Activated CD4-positive, alpha-beta memory T cell treated with anti-CD3 and anti-CD28 coated beads, Interleukin-2, amount 10 ng/mL, durations not matched to agents 7 days and 5 days (primary cell): ENCODE measurements at regions of chr4 and their contacts with region 1.

Region 1: GRCh38 chr4:154998284-154998683 is 210.2 kb upstream of the NPY2R start:
- DNase-seq: no peak
- H3K4me3 Mint-ChIP-seq: no peak overlapping the region
- H3K27ac Mint-ChIP-seq: no peak overlapping the region
- H3K4me1 Mint-ChIP-seq: no peaks in the 10 kb centered on the region
- H3K27me3 Mint-ChIP-seq: no peaks in the 10 kb centered on the region

Region 2: GRCh38 chr4:154982187-154983047 is 15.9 kb before region 1 on chr4:
- CTCF ChIA-PET with region 1: interaction called, 10 read pairs
- POLR2A ChIA-PET with region 1: no interaction called
- DNase-seq: peak; percentile 32
- H3K4me3 Mint-ChIP-seq: no peak overlapping the region
- H3K27ac Mint-ChIP-seq: no peak overlapping the region
- H3K4me1 Mint-ChIP-seq: no peaks in the 10 kb centered on the region
- H3K27me3 Mint-ChIP-seq: peaks cover 4% of the 10 kb centered on the region